CD4-positive, alpha-beta memory T cell (primary cell): ENCODE measurements at regions of chr5 and their contacts with region 1.

Region 1: DNA sequence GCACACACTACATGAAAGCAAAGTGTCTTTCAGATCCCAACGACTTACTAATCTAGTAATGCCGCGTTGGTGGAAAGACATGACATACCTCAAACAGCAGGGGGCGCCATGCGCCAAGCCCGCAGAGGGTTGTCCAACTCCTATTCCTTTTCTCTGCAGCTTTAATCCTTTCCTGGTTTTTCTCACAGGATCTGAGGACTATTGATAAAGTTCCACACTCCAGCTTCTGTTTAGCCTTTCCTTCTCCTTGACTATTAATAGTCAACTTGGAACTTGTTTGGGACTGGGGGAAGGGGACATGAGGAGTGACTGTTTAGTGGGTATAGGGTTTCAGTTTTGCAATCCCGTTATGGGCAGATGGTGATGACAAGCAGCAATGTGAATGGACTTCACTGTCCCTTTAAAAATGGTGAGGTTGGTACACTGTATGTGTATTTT is 62.9 kb downstream of the OTULIN start:
- DNase-seq: peak; percentile 66 to 75 (median 71)
- H3K4me3 ChIP-seq: no peak overlapping the region
- H3K4me3 Mint-ChIP-seq: no peak overlapping the region
- H3K27ac ChIP-seq: no peak overlapping the region
- H3K27ac Mint-ChIP-seq: peak overlapping the region in 4 of 7 donors; percentile 47 to 75 (median 60)
- H3K4me1 ChIP-seq: no peaks in the 10 kb centered on the region
- H3K4me1 Mint-ChIP-seq: peaks cover 8 to 15% (median 13%) of the 10 kb centered on the region in 4 donors
- H3K27me3 ChIP-seq: no peaks in the 10 kb centered on the region
- H3K27me3 Mint-ChIP-seq: no peaks in the 10 kb centered on the region

Region 2: DNA sequence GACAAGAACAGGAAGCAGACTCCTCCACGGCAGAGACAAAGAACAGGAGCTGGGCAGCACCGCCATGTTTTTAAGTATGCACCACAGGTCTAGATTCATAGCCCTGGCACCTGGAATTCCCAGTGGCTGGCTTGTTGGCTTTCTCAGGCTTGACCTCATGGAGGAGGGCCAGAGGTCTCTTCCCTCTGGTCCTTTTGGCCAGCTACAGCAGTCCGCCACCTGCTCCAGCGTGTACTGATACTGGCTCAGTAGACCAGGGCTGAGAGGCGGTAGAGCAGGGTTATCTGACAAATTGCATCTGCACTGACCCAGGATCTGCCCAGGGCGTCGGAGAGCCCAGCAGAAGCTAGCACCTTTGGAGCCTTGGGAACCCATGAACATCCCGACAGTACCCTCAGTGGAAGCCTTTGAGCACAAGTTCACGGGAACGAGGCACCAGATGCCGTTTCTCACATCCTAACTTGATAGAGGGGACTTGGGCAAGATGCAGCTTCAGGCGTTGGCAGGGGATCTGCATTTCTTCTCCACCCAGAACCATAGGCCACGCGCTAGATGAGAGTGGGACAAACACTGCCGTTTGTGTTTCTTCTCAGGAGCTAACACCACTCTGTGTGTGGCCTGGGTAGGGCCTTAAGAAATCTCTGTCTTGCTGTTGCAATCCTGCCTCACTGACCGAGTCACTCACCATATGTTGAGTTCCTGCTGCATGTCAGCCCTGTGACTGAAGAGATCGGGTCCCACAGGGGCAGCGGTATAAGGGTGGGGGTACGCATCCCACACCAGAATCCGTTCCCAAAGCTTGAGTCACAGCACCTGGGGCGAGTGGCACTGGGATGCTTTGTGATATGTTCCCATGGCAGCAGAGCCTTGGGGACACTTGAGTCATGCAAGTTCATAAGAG is 236.2 kb before region 1 on chr5:
- CTCF ChIA-PET with region 1: no interaction called
- POLR2A ChIA-PET with region 1: no interaction called
- intact Hi-C with region 1: no loop called
- DNase-seq: no peak
- H3K4me3 ChIP-seq: no peak overlapping the region
- H3K4me3 Mint-ChIP-seq: no peak overlapping the region
- H3K27ac ChIP-seq: no peak overlapping the region
- H3K27ac Mint-ChIP-seq: no peak overlapping the region
- H3K4me1 ChIP-seq: no peaks in the 10 kb centered on the region
- H3K4me1 Mint-ChIP-seq: no peaks in the 10 kb centered on the region
- H3K27me3 ChIP-seq: no peaks in the 10 kb centered on the region
- H3K27me3 Mint-ChIP-seq: no peaks in the 10 kb centered on the region

Region 3: DNA sequence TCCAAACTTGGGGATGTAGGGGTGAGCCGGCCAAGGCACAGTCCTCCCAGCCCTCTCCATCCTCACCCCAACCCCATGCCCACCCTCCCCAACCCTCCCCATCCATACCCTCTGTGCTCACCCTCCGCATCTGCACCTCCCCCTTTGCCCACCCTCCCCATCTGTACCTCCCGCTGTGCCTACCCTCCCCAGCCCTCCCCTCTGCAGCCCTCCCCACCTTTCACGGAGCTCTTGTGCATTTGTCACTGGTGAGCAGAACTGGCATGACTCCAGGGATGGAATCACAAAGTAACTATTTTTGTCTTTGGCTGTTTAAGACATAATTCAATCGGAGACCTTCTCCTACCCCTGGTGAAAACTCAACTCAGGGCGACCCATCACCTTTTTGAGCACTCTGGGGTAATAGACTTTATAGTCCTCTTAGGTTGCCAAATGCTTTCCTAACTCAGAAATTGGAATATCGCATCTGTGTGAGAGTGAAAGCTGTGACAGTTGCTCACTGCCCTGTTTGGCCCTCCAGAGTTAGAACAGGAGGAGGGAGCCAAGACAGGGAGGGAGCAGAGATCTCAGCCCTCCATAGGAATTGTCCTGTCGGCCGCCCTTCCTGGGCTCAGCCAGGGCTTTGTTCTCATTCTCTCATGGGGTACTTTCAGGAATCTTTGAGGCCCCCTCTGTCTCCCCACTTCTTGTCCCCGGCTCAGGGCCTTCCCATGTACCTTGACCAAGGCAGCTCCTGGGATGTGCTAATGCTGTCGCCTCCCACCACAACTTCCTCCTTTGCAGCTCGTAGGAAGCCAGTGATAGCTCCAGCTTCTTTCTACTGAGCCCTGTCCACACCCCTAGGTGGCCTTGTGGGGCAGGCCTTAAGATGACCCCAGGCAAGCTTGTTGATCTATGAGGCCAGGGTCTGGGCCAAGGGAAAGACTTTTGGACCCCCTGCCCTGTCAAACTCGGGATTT is 26.7 kb before region 1 on chr5:
- CTCF ChIA-PET with region 1: interaction called, 64 read pairs
- POLR2A ChIA-PET with region 1: interaction called, 3 read pairs
- intact Hi-C with region 1: no loop called
- DNase-seq: no peak
- H3K4me3 ChIP-seq: no peak overlapping the region
- H3K4me3 Mint-ChIP-seq: peak overlapping the region in 4 of 8 donors; percentile 12 to 54 (median 35)
- H3K27ac ChIP-seq: peak overlapping the region; percentile 7
- H3K27ac Mint-ChIP-seq: peak overlapping the region; percentile 79 to 99 (median 94)
- H3K4me1 ChIP-seq: peaks cover 59% of the 10 kb centered on the region
- H3K4me1 Mint-ChIP-seq: peaks cover 53 to 91% (median 63%) of the 10 kb centered on the region in 4 donors
- H3K27me3 ChIP-seq: no peaks in the 10 kb centered on the region
- H3K27me3 Mint-ChIP-seq: no peaks in the 10 kb centered on the region

Region 4: DNA sequence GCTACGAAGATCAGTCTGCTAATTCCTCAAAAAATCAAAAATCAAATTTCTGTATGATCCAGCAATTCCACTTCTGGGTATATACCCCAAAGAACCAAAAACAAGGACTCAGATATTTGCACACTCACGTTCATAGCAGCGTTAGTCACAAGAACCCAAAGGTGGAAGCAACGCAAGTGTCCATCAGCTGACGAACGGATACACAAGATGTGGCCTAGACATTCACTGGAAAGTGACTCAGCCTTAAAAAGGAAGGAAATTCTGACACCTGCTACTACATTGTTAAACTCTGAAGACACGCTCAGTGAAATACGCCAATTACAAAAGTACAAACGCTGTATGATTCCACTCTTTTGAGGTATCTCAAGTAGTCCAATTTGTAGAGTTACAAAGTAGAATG is 30.4 kb after region 1 on chr5:
- CTCF ChIA-PET with region 1: interaction called, 10 read pairs
- POLR2A ChIA-PET with region 1: no interaction called
- intact Hi-C with region 1: no loop called
- DNase-seq: no peak
- H3K4me3 ChIP-seq: no peak overlapping the region
- H3K4me3 Mint-ChIP-seq: no peak overlapping the region
- H3K27ac ChIP-seq: no peak overlapping the region
- H3K27ac Mint-ChIP-seq: peak overlapping the region in 2 of 7 donors; percentile 3 to 24
- H3K4me1 ChIP-seq: no peaks in the 10 kb centered on the region
- H3K4me1 Mint-ChIP-seq: peaks cover 4 to 14% (median 10%) of the 10 kb centered on the region in 4 donors
- H3K27me3 ChIP-seq: no peaks in the 10 kb centered on the region
- H3K27me3 Mint-ChIP-seq: no peaks in the 10 kb centered on the region

Region 5: DNA sequence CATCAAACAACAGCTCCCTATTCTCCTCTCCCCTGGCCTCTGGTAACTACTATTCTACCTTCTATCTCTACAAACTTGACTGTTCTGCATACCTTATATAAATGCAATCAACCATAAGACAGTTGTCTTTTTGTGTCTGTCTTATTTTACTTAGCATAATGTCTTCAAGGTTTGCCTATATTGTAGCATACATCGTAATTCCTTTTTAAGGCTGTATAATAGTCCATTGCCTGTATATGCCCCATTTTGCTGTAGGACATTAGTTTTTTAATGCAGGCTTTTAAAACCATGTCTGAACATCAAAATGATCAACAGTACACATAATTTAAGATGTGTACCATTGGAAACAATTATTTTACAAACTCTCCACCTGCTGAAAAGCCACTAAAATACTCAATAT is 131.7 kb after region 1 on chr5:
- CTCF ChIA-PET with region 1: no interaction called
- POLR2A ChIA-PET with region 1: no interaction called
- intact Hi-C with region 1: no loop called
- DNase-seq: no peak
- H3K4me3 ChIP-seq: no peak overlapping the region
- H3K4me3 Mint-ChIP-seq: no peak overlapping the region
- H3K27ac ChIP-seq: no peak overlapping the region
- H3K27ac Mint-ChIP-seq: peak overlapping the region in 1 of 7 donors; percentile 47
- H3K4me1 ChIP-seq: peaks cover 7% of the 10 kb centered on the region
- H3K4me1 Mint-ChIP-seq: peaks cover 46 to 78% (median 58%) of the 10 kb centered on the region in 4 donors
- H3K27me3 ChIP-seq: no peaks in the 10 kb centered on the region
- H3K27me3 Mint-ChIP-seq: no peaks in the 10 kb centered on the region

Region 6: GRCh38 chr5:14879937-14880589 is 152.6 kb after region 1 on chr5:
- CTCF ChIA-PET with region 1: interaction called, 11 read pairs
- POLR2A ChIA-PET with region 1: no interaction called
- intact Hi-C with region 1: no loop called
- DNase-seq: no peak
- H3K4me3 ChIP-seq: no peak overlapping the region
- H3K4me3 Mint-ChIP-seq: no peak overlapping the region
- H3K27ac ChIP-seq: no peak overlapping the region
- H3K27ac Mint-ChIP-seq: no peak overlapping the region
- H3K4me1 ChIP-seq: no peaks in the 10 kb centered on the region
- H3K4me1 Mint-ChIP-seq: peaks cover 0 to 3% (median under 1%) of the 10 kb centered on the region in 4 donors
- H3K27me3 ChIP-seq: no peaks in the 10 kb centered on the region
- H3K27me3 Mint-ChIP-seq: peaks cover 3 to 4% of the 10 kb centered on the region in 2 donors

Region 7: GRCh38 chr5:14958196-14958595 is 230.7 kb after region 1 on chr5:
- CTCF ChIA-PET with region 1: interaction called, 19 read pairs
- POLR2A ChIA-PET with region 1: no interaction called
- intact Hi-C with region 1: no loop called
- DNase-seq: no peak
- H3K4me3 ChIP-seq: no peak overlapping the region
- H3K4me3 Mint-ChIP-seq: no peak overlapping the region
- H3K27ac ChIP-seq: no peak overlapping the region
- H3K27ac Mint-ChIP-seq: no peak overlapping the region
- H3K4me1 ChIP-seq: no peaks in the 10 kb centered on the region
- H3K4me1 Mint-ChIP-seq: peaks cover 0 to 2% (median 0%) of the 10 kb centered on the region in 4 donors
- H3K27me3 ChIP-seq: no peaks in the 10 kb centered on the region
- H3K27me3 Mint-ChIP-seq: no peaks in the 10 kb centered on the region

Region 8: DNA sequence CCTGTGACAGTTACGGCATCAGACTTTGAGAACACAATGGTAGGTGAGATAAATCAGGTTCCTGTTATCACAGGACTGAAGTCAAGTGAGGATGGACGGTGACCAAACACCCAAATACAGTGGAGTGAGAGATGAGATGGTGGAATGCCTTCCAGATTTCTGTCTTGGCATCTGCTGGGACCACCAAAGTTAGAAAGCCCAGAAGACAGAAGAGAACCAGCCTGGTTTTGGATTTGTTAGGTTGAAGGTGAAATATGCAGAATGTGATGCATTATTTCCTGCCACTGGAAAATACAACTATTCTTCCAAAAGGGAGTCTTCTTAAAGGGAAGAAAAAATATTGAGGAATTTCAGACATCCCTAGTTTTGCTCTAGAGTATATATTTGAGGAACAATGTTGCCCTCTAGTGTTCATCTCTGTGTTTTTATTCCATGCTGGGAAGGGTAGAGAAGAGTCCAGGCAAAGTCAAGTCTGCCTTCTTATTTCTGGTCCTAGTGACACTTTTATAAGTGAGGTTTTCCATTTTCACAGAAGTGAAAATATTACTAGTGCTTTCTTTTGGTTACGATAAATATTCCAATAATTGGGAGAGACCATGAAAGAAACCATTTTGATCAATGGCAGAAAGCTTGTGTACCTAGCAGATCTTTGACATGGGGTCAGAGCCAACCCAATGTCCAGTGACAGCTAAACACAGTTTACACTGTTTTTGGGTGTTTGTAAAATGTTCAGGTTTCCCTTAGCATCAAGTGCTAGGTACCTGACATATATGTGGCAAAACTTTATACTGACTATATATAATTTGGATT is 286.4 kb after region 1 on chr5:
- CTCF ChIA-PET with region 1: interaction called, 32 read pairs
- POLR2A ChIA-PET with region 1: no interaction called
- intact Hi-C with region 1: loop called (anchors 1 kb)
- DNase-seq: peak in 4 of 5 donors; percentile 19 to 36 (median 28)
- H3K4me3 ChIP-seq: no peak overlapping the region
- H3K4me3 Mint-ChIP-seq: no peak overlapping the region
- H3K27ac ChIP-seq: no peak overlapping the region
- H3K27ac Mint-ChIP-seq: no peak overlapping the region
- H3K4me1 ChIP-seq: no peaks in the 10 kb centered on the region
- H3K4me1 Mint-ChIP-seq: no peaks in the 10 kb centered on the region
- H3K27me3 ChIP-seq: no peaks in the 10 kb centered on the region
- H3K27me3 Mint-ChIP-seq: peaks cover 0 to under 1% of the 10 kb centered on the region in 2 donors